GM23248 (cell line): ENCODE measurements at regions of chr3 and their contacts with region 1.

Region 1: GRCh38 chr3:156674046-156674910 is at the start of gene TIPARP:
- DNase-seq: peak; percentile 99
- H3K4me3 ChIP-seq: peak within 1 kb of the TSS; percentile 99
- H3K27ac ChIP-seq: peak within 1 kb of the TSS; percentile 94
- H3K4me1 ChIP-seq: peaks cover 26% of the 10 kb centered on the region
- H3K27me3 ChIP-seq: no peaks in the 10 kb centered on the region
- total RNA-seq, gene TIPARP: 89.5 and 103 TPM in 2 replicates

Region 2: GRCh38 chr3:156151824-156152428 is 522.4 kb before region 1 on chr3:
- in situ Hi-C with region 1: loop called (anchors 10 kb)
- DNase-seq: peak; percentile 83
- H3K4me3 ChIP-seq: no peak overlapping the region
- H3K27ac ChIP-seq: 0 out of 2 replicates have a peak overlapping the region, but pooled peaks have one; percentile 16
- H3K4me1 ChIP-seq: peaks cover 6% of the 10 kb centered on the region; the same call in 1 of the 2 replicates
- H3K27me3 ChIP-seq: no peaks in the 10 kb centered on the region